ENCODE measurements at regions of chr11 and their contacts with region 1.

Region 1: DNA sequence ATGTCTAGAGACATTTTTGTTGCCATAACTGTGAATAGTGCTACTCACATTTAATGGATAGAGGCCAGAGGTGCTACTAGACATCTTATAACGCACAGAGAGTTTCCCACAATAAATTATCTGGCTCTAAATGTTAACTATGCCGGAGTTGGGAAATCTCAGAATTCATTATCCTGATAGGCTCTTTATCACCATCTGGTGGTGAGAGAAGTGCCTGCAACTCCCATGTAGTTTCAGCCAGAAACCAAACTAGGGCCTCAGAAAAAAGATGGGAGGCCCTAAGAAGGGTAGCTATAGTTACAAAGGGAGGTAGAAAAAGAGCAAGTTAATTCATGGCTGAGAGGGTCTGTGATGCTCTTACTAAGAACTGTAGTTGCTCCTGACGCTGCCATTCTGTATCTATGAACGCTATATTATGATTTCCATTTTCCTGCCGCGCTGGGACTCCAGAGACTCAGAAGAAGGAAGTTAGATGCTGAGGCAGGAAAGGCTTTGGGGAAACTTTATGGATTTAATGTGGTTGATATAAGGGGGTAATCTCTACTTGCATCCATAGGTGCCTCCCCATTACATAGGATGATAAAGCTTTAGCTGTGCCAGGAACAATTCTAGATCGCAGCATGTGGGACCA is 22.9 kb upstream of the MRPL17 start:
- DNase-seq: no peak
- H3K4me3 ChIP-seq: no peak overlapping the region
- H3K27me3 ChIP-seq: no peaks in the 10 kb centered on the region
- CTCF ChIP-seq: peak; percentile 94

Region 2: GRCh38 chr11:6443269-6444003 is 262.6 kb before region 1 on chr11:
- CTCF ChIA-PET with region 1: interaction called, 13 read pairs
- POLR2A ChIA-PET with region 1: no interaction called
- DNase-seq: no peak
- H3K4me3 ChIP-seq: no peak overlapping the region
- H3K27me3 ChIP-seq: no peaks in the 10 kb centered on the region
- CTCF ChIP-seq: peak; percentile 92

Region 3: GRCh38 chr11:6523253-6523652 is 182.8 kb before region 1 on chr11:
- CTCF ChIA-PET with region 1: interaction called, 13 read pairs
- POLR2A ChIA-PET with region 1: no interaction called
- DNase-seq: no peak
- H3K4me3 ChIP-seq: no peak overlapping the region
- H3K27me3 ChIP-seq: no peaks in the 10 kb centered on the region
- CTCF ChIP-seq: no peak

Region 4: DNA sequence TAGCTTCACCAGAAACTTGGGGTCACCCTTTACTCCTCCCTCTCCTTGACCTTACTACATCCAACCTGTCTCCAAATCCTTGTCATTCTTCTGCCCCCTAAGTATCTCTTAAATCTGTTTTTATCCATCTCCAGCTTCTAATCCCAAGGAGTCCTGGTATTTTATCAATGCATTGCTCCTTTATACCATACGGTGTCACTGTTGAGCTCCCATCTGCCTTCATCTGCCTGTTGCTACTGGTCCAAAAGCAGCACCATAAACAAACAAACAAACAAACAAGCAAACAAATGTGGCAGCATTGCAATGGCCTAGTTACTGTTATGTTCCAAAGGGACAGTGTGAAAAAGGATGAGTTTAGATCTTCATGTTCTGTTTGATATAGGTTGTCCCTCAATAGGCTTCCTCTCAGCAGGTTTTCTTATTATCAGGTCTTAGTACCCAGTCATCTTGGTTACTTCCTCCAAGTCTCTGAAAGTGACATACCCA is 174.7 kb before region 1 on chr11:
- CTCF ChIA-PET with region 1: interaction called, 40 read pairs
- POLR2A ChIA-PET with region 1: no interaction called
- DNase-seq: no peak
- H3K4me3 ChIP-seq: no peak overlapping the region
- H3K27me3 ChIP-seq: no peaks in the 10 kb centered on the region
- CTCF ChIP-seq: peak; percentile 82

Region 5: DNA sequence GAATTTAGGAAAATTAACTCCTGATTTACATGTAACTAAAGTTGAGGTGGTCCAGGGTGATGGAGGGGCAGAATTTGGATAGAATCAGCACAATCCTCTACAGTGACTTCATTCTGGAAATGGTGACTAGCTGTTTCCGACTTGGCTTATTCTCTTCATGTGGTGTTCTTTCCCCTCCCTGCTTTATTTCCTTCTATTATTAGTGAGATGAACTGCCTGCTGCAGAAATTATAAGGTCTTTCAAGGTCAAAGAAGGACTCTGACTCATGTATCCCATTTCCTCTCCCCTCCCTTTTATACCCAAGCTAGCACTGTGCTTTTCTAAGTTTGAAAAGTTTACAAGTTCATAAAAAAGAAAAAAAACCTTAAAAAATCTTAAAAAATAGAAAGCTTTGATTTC is 10.6 kb before region 1 on chr11:
- CTCF ChIA-PET with region 1: interaction called, 12 read pairs
- POLR2A ChIA-PET with region 1: no interaction called
- DNase-seq: peak; percentile 37
- H3K4me3 ChIP-seq: no peak overlapping the region
- H3K27me3 ChIP-seq: no peaks in the 10 kb centered on the region
- CTCF ChIP-seq: no peak

Region 6: DNA sequence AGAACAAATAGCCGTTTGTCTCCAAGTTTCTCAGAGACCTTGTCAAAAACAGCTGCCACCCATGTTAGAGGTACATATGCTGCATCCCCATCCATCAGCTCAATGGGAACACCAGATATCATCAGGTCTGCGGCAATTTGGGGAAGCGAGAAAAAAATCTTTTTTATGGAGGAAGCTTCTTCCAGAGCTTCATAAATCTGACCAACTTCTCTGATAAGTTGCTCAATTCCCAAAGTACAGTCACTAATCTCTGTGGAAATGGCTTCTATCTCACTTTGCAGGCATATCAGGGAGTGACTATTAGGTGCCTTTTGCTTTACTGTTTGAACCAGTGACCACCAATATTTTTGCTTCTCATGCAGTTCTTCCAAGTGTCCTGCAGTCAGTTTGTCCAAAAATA is 11.4 kb after region 1 on chr11:
- CTCF ChIA-PET with region 1: interaction called, 19 read pairs
- POLR2A ChIA-PET with region 1: no interaction called
- DNase-seq: no peak
- H3K4me3 ChIP-seq: no peak overlapping the region
- H3K27me3 ChIP-seq: peaks cover 3% of the 10 kb centered on the region; the same call in 1 of the 2 replicates
- CTCF ChIP-seq: no peak

Region 7: DNA sequence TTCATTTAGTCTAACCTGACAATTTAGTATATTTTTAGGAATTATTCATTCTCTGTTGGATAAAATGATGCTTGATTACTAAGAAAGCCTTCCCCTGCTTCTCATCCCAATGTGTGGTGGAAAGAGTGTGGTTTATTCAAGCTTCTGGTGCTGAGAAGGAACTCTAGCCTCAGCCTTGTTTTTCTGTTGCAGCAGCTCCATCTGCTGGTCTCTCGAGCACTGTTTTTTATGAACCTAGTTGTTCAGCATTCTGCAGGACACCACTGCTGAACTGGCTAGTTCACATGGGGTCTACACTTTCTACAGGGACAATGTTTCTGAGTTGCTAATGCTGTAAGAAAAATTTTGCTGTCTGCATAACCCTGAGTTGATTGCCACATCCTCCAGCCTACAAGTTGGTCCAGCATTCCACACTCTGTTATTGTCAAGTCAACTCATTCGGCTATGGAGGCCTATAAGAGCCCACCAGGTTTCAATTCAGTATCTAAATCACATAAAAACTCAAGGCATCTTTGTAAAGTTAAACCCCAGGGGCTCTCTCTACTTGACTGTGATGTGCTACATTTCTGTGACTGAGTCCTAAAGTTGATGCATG is 51.5 kb after region 1 on chr11:
- CTCF ChIA-PET with region 1: interaction called, 54 read pairs
- POLR2A ChIA-PET with region 1: no interaction called
- DNase-seq: no peak
- H3K4me3 ChIP-seq: no peak overlapping the region
- H3K27me3 ChIP-seq: peaks cover 1% of the 10 kb centered on the region; the same call in 1 of the 2 replicates
- CTCF ChIP-seq: peak; percentile 76

Measured in BJ (cell line).